ENCODE measurements at regions of chr1 and their contacts with region 1.

Region 1: GRCh38 chr1:192477630-192478029 is 97.9 kb upstream of the RGS1 start:
- DNase-seq: peak; percentile 64
- ATAC-seq: peak; percentile 58
- H3K4me3 ChIP-seq: no peak overlapping the region
- H3K4me3 Mint-ChIP-seq: no peak overlapping the region
- H3K27ac ChIP-seq: no peak overlapping the region
- H3K27ac Mint-ChIP-seq: no peak overlapping the region
- H3K4me1 ChIP-seq: no peaks in the 10 kb centered on the region
- H3K4me1 Mint-ChIP-seq: no peaks in the 10 kb centered on the region
- H3K27me3 ChIP-seq: peaks cover 0 to 14% (median 10%) of the 10 kb centered on the region in 4 experiments
- H3K27me3 Mint-ChIP-seq: peaks cover 16% of the 10 kb centered on the region
- CTCF ChIP-seq: peak; percentile 77

Region 2: DNA sequence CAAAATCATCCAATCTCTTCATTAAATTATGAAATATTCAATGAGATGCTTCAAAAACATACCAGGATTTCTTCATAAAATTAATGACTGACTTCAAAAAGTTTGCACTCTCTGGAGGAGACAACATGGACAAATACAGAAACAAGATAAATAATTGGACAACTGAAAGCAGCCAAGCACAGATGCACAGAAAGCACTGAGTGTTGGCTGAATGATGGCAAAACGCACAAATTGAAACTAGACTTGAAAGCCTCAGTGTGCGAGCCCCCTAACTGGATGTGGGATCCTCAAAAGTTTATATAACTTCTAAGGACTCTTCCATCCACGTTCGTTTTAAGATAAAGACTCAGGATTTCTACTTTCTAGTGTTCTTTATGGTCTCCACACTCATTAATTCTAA is 291.4 kb before region 1 on chr1:
- CTCF ChIA-PET with region 1: no interaction called
- POLR2A ChIA-PET with region 1: no interaction called
- intact Hi-C with region 1: no loop called
- DNase-seq: no peak
- ATAC-seq: no peak
- H3K4me3 ChIP-seq: no peak overlapping the region
- H3K4me3 Mint-ChIP-seq: no peak overlapping the region
- H3K27ac ChIP-seq: no peak overlapping the region
- H3K27ac Mint-ChIP-seq: no peak overlapping the region
- H3K4me1 ChIP-seq: no peaks in the 10 kb centered on the region
- H3K4me1 Mint-ChIP-seq: no peaks in the 10 kb centered on the region
- H3K27me3 ChIP-seq: no peaks in the 10 kb centered on the region
- H3K27me3 Mint-ChIP-seq: no peaks in the 10 kb centered on the region
- CTCF ChIP-seq: no peak

Region 3: DNA sequence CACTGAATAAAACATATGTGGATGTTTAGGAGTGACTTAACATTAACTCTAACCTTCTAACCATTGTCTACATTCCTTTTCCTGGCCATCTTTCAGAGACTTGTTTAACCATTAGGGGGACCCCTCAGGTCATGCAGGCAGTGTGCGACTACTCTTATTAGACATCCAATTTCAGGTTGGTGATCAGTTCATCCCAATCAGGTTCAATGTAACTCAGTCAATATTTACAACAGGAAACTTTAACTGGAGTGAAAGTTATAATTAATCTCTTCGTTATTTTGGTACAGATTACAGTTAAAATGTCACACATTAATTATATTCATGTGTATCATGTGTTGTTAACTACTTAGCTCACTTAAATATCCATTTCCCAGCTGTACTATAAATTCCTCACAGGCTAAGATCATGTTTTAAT is 29.1 kb after region 1 on chr1:
- CTCF ChIA-PET with region 1: interaction called, 14 read pairs
- POLR2A ChIA-PET with region 1: no interaction called
- intact Hi-C with region 1: no loop called
- DNase-seq: peak; percentile 31
- ATAC-seq: peak; percentile 66
- H3K4me3 ChIP-seq: no peak overlapping the region
- H3K4me3 Mint-ChIP-seq: no peak overlapping the region
- H3K27ac ChIP-seq: no peak overlapping the region
- H3K27ac Mint-ChIP-seq: no peak overlapping the region
- H3K4me1 ChIP-seq: no peaks in the 10 kb centered on the region
- H3K4me1 Mint-ChIP-seq: no peaks in the 10 kb centered on the region
- H3K27me3 ChIP-seq: peaks cover 0 to 3% (median 0%) of the 10 kb centered on the region in 4 experiments
- H3K27me3 Mint-ChIP-seq: peaks cover 10% of the 10 kb centered on the region
- CTCF ChIP-seq: no peak

Region 4: GRCh38 chr1:192539297-192540092 is 61.9 kb after region 1 on chr1:
- CTCF ChIA-PET with region 1: interaction called, 14 read pairs
- POLR2A ChIA-PET with region 1: no interaction called
- intact Hi-C with region 1: loop called (anchors 2 kb)
- DNase-seq: peak; percentile 25
- ATAC-seq: peak; percentile 16
- H3K4me3 ChIP-seq: no peak overlapping the region
- H3K4me3 Mint-ChIP-seq: peak overlapping the region; percentile 18
- H3K27ac ChIP-seq: peak overlapping the region in 1 of 2 donors; percentile 36
- H3K27ac Mint-ChIP-seq: peak overlapping the region; percentile 8
- H3K4me1 ChIP-seq: peaks cover 13 to 16% of the 10 kb centered on the region in 2 donors
- H3K4me1 Mint-ChIP-seq: peaks cover 35% of the 10 kb centered on the region
- H3K27me3 ChIP-seq: peaks cover 0 to 9% (median 0%) of the 10 kb centered on the region in 4 experiments
- H3K27me3 Mint-ChIP-seq: no peaks in the 10 kb centered on the region
- CTCF ChIP-seq: no peak

Region 5: DNA sequence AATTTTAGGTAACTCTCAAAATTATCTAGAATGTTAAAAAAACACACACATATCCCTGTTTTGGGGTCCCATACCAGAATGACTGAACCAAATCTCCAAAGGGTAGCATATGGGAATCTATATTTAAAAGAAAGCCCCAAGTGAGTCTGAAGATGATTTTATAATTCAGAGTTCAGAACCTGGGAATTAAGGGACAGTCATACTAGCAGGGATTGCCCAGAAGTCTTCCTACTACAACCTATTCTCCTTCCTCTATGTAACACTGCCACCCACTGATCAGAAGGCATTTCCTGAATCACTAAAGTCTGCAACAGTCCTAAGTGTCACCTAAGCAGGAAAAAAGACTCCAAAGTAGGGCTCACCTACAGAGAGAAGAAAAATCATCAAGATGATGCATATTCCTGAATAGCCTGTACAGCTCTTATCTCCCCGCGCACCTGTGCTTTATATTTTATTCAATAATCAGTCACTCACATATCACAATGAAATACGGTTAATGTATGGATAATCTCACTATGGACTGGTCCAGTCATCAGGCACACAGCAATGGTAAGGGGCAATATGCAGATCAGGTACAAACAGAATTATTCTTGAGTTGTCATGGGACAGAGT is 102.8 kb after region 1 on chr1:
- CTCF ChIA-PET with region 1: interaction called, 188 read pairs
- POLR2A ChIA-PET with region 1: no interaction called
- intact Hi-C with region 1: loop called (anchors 1 kb)
- DNase-seq: peak; percentile 55
- ATAC-seq: no peak
- H3K4me3 ChIP-seq: no peak overlapping the region
- H3K4me3 Mint-ChIP-seq: peak overlapping the region; percentile 73
- H3K27ac ChIP-seq: no peak overlapping the region
- H3K27ac Mint-ChIP-seq: no peak overlapping the region
- H3K4me1 ChIP-seq: peaks cover 11 to 13% of the 10 kb centered on the region in 2 donors
- H3K4me1 Mint-ChIP-seq: peaks cover 38% of the 10 kb centered on the region
- H3K27me3 ChIP-seq: peaks cover 0 to 5% (median 0%) of the 10 kb centered on the region in 4 experiments
- H3K27me3 Mint-ChIP-seq: peaks cover 6% of the 10 kb centered on the region
- CTCF ChIP-seq: peak; percentile 31

Region 6: DNA sequence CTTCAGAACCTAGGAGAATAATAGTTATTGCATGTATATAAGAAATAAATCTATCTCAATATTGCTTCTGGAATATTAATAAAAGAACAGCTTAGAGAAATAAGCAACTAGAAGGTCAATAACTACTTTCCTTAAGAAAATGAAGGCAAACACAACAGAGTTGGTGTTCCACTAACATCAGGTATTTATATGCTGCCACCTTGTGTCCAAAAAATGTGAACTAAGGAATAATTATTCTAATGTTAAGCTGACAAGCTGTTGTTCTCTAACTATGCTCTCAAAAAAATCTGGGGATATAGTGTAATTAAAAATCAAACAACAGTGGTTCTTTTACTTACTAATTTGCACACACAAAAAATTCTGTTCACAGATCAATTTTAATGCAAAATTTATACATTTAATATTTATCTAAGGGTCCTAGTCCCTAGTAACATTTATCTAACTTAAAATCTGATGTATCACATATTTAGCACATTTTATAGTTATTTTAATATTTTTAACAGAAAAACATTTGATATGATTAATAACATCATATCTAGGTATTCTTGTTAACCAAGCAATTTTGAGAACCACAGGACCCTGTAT is 541.9 kb after region 1 on chr1:
- CTCF ChIA-PET with region 1: interaction called, 77 read pairs
- POLR2A ChIA-PET with region 1: no interaction called
- intact Hi-C with region 1: loop called (anchors 1 kb)
- DNase-seq: peak; percentile 58
- ATAC-seq: peak; percentile 64
- H3K4me3 ChIP-seq: no peak overlapping the region
- H3K4me3 Mint-ChIP-seq: no peak overlapping the region
- H3K27ac ChIP-seq: no peak overlapping the region
- H3K27ac Mint-ChIP-seq: no peak overlapping the region
- H3K4me1 ChIP-seq: no peaks in the 10 kb centered on the region
- H3K4me1 Mint-ChIP-seq: no peaks in the 10 kb centered on the region
- H3K27me3 ChIP-seq: no peaks in the 10 kb centered on the region
- H3K27me3 Mint-ChIP-seq: no peaks in the 10 kb centered on the region
- CTCF ChIP-seq: peak; percentile 71

Region 7: DNA sequence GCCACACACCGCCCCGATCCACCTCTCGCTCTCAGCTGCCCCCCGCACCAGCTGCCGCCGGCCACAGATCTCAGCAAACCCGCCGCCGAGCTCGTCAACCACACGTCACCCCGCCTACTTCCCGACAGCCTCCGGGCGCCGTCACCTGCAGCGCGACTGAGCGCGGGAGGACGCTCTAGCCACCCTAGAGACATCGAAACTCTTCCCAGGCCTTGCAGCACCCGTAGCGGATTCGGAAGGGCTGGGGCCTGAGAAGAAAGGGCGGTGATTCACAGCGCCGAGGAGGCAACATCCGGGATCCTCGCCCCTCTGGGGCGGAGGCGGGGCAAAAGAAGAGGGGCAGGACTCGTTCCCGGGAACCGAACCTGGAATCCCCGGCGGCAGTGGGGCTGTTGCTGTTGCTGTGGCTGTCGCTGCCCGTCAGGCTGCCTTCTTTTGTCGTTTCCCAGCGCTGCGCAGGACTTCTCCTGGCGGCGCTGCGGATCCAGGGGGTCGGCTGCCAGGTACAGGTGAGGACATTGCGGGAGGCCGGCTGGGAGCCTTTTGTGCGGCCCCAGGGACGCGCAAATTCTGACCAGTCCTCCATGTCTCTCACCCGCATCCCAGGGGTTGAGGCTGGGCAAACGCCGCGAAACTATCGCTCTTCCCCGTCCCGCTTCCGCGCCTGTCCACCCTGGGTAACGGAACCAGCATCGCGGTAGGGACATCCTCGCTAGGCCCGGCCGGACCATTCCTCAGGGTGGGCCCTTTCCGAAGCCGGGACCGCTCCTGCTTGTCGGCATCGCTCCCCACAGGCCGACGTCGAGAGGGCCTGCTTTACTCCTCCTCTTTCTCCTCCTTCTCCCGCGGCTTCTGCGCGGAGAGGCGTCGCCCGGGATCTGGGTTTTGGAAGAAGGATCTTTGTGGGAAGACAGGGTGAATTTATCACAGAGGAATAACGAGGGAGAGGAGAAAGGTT is 581.9 kb after region 1 on chr1 and contains the starts of genes RO60 and UCHL5:
- CTCF ChIA-PET with region 1: interaction called, 11 read pairs
- POLR2A ChIA-PET with region 1: no interaction called
- intact Hi-C with region 1: no loop called
- DNase-seq: peak; percentile 96
- ATAC-seq: peak; percentile 95
- H3K4me3 ChIP-seq: peak within 1 kb of the TSS; percentile 62 to 99 (median 91)
- H3K4me3 Mint-ChIP-seq: peak within 1 kb of the TSS; percentile 98
- H3K27ac ChIP-seq: peak within 1 kb of the TSS; percentile 89 to 94
- H3K27ac Mint-ChIP-seq: peak within 1 kb of the TSS; percentile 99
- H3K4me1 ChIP-seq: peaks cover 21 to 25% of the 10 kb centered on the region in 2 donors
- H3K4me1 Mint-ChIP-seq: peaks cover 51% of the 10 kb centered on the region
- H3K27me3 ChIP-seq: no peaks in the 10 kb centered on the region
- H3K27me3 Mint-ChIP-seq: no peaks in the 10 kb centered on the region
- CTCF ChIP-seq: no peak
- total RNA-seq, gene RO60: 66.4 and 78.2 TPM in 2 replicates
- total RNA-seq, gene UCHL5: 31.5 and 32.9 TPM in 2 replicates

Region 8: GRCh38 chr1:194295685-194296084 is 1818.1 kb after region 1 on chr1:
- CTCF ChIA-PET with region 1: no interaction called
- POLR2A ChIA-PET with region 1: no interaction called
- intact Hi-C with region 1: loop called (anchors 5 kb)
- DNase-seq: peak; percentile 77
- ATAC-seq: peak; percentile 93
- H3K4me3 ChIP-seq: no peak overlapping the region
- H3K4me3 Mint-ChIP-seq: no peak overlapping the region
- H3K27ac ChIP-seq: no peak overlapping the region
- H3K27ac Mint-ChIP-seq: no peak overlapping the region
- H3K4me1 ChIP-seq: no peaks in the 10 kb centered on the region
- H3K4me1 Mint-ChIP-seq: peaks cover 9% of the 10 kb centered on the region
- H3K27me3 ChIP-seq: peaks cover 0 to 9% (median 5%) of the 10 kb centered on the region in 4 experiments
- H3K27me3 Mint-ChIP-seq: peaks cover 21% of the 10 kb centered on the region
- CTCF ChIP-seq: peak; percentile 84